WTC11 (cell line): ENCODE measurements at regions of chr2 and their contacts with region 1.

Region 1: DNA sequence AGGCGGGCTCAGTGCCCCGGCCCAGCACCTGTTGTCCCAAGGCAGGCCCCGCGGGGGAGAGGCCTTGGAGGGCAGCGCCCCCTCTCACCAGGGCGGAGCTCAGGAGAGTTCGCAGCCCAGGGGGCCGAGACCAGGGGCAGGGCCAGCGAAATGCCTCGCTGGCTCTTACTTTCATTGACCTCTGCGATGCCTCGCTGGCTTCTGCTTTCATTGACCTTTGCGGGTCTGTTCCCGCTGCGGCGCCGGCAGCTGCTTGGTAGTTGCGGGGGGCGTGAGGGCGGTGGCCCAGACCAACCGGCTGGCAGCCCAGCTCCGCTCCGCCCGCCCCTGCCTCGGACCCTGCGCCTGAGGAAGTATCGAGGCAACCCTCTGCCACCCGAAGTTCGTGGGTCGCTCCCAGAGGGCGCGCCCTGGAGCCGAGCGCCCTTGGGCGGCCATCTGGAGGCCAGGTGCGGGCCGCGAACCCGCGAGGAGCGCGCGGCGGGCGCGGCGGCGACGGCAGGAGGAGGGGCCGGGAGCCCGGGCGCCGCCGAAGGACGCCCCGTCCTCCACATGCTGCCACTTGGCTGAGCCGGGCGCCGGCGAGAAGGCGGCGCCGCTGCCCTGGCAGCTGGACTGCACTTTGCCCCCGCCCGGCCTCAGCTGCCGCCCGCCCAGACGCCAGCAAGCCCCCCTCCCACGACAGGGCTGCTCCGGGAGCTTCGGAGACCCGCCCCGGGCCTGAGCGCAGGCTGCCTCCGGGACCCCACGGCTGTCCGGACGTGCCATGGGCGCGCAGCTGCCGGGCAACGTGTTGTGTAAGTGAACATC is 118.0 kb upstream of the MSTN start:
- DNase-seq: peak; percentile 74
- ATAC-seq: peak; percentile 86
- H3K4me3 Mint-ChIP-seq: peak overlapping the region; percentile 71
- H3K27ac Mint-ChIP-seq: no peak overlapping the region
- H3K4me1 Mint-ChIP-seq: peaks cover 8% of the 10 kb centered on the region
- H3K27me3 Mint-ChIP-seq: peaks cover 18% of the 10 kb centered on the region
- CTCF ChIP-seq: no peak; the same call in 1 of the 2 replicates

Region 2: GRCh38 chr2:190216829-190217228 is 36.3 kb after region 1 on chr2:
- CTCF ChIA-PET with region 1: interaction called, 26 read pairs
- POLR2A ChIA-PET with region 1: interaction called, 3 read pairs
- DNase-seq: peak; percentile 48
- ATAC-seq: peak; percentile 82
- H3K4me3 Mint-ChIP-seq: no peak overlapping the region
- H3K27ac Mint-ChIP-seq: peak overlapping the region; percentile 91; the same call in 1 of the 2 replicates
- H3K4me1 Mint-ChIP-seq: peaks cover 44% of the 10 kb centered on the region
- H3K27me3 Mint-ChIP-seq: no peaks in the 10 kb centered on the region
- CTCF ChIP-seq: no peak